Thyroid gland (tissue), 4 donors: ENCODE measurements at regions of chr7 and their contacts with region 1.

Region 1: GRCh38 chr7:6272481-6273323 is at the start of gene CYTH3:
- DNase-seq: peak; percentile 77 to 83
- H3K4me3 ChIP-seq: peak within 1 kb of the TSS; percentile 12 to 93 (median 61)
- H3K27ac ChIP-seq: peak within 1 kb of the TSS; percentile 14 to 78 (median 64)
- H3K4me1 ChIP-seq: peaks cover 5 to 18% of the 10 kb centered on the region in 2 donors
- H3K27me3 ChIP-seq: no peaks in the 10 kb centered on the region
- CTCF ChIP-seq: peak in 1 of 6 experiments; percentile 12
- POLR2A ChIP-seq: peak; percentile 90 to 91
- total RNA-seq, gene CYTH3: 41.0 to 75.5 (median 56.7) TPM

Region 2: GRCh38 chr7:6175645-6176044 is 97.1 kb before region 1 on chr7:
- intact Hi-C with region 1: loop called (anchors 10 kb)
- DNase-seq: no peak
- H3K4me3 ChIP-seq: no peak overlapping the region
- H3K27ac ChIP-seq: peak overlapping the region in 1 of 3 donors; percentile 52
- H3K4me1 ChIP-seq: peaks cover 7 to 27% of the 10 kb centered on the region in 2 donors
- H3K27me3 ChIP-seq: no peaks in the 10 kb centered on the region
- CTCF ChIP-seq: no peak
- POLR2A ChIP-seq: no peak